Cardiac septum (tissue), 1 donor: ENCODE measurements at regions of chr3 and their contacts with region 1.

Region 1: DNA sequence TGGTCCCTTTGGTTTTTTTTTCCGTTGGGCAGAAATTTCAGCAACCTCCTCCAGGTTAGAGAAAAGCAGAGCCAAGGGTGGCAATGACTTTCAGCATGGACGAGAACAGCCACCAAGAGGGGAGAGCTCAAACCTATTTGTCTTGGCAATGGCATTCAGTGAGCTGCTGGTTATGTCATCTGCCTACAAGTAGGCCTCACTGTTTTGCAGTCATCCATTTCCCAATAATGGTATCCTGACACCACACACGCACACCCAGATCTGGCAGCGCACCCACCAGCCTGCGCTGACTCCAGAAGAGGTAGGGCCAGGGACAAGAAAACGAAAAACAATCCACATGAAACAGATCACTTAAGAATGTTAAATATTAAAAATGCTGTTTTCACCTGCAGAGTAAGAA is 92.3 kb downstream of the MAGI1 start:
- DNase-seq: no peak

Region 2: DNA sequence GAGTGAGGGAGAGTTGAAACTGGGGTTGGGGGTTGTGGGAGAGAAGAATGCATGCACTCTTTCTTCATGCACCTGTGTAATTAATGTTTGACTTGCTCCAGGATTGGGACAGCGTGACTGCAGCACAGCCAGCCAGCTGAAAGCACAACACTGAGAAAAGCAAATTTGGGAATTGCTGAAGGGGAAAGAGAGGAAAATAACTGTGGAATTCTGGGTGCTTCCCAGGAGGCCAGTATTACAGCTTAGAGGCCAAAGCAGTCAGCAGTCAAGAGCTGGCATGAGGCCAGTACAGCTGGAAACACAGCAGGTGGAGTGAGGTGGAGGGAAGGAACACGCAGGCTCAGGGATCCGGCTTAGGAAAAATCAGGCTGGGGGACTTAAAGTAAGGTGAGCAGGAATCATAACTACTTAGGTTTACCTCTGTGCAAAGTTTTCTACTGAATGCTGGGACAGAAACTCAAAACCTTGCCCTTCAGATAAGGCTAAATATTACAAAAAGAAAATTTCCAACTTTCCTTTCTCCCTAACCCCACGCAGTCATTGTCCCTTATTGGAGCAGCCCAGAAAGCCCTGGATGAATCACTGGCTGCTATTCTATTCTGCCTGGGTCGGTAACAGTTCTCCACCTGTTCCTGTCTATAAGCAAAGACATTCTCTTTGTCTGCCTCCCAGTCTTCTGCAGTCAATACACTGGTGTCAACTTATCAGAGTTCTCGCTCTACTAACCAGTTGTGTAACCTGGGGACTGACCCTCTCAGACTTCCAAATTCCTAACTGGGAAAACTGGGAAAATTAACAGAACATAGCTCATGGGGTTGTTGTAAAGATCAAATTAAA is 74.9 kb before region 1 on chr3:
- intact Hi-C with region 1: no loop called
- DNase-seq: no peak

Region 3: GRCh38 chr3:65999606-66000005 is 53.2 kb after region 1 on chr3:
- intact Hi-C with region 1: loop called (anchors 5 kb)
- DNase-seq: no peak